Posterior vena cava (tissue), 2 donors: ENCODE measurements at regions of chr1 and their contacts with region 1.

Region 1: GRCh38 chr1:163174524-163175437 is 27.9 kb downstream of the RGS5 start:
- DNase-seq: peak; percentile 91

Region 2: DNA sequence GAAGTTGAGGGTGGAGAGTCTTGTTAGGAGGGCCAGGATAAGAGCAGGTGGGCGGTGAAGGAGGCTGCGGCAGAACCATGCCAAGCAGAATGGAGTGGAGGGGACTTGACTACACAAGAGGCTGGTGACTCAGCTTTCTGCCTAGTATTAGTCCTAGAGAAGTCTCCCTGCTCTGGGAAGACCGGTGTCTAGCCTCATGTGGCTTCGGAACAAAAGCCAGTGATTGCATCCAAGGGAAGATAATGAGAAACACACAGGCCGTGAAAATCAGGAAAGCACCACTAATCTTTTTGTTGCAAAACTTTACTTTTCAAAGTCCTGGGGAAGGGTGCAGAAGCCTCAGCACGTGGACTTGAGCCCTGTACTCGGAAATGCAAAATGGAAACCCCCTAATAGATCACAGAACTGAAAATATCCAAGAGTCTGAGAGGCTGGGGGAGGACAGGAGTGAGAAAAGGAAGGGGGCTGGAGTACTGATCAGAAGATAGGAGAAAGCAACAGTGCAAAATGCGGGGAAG is 511.1 kb before region 1 on chr1:
- intact Hi-C with region 1: no loop called
- DNase-seq: no peak

Region 3: DNA sequence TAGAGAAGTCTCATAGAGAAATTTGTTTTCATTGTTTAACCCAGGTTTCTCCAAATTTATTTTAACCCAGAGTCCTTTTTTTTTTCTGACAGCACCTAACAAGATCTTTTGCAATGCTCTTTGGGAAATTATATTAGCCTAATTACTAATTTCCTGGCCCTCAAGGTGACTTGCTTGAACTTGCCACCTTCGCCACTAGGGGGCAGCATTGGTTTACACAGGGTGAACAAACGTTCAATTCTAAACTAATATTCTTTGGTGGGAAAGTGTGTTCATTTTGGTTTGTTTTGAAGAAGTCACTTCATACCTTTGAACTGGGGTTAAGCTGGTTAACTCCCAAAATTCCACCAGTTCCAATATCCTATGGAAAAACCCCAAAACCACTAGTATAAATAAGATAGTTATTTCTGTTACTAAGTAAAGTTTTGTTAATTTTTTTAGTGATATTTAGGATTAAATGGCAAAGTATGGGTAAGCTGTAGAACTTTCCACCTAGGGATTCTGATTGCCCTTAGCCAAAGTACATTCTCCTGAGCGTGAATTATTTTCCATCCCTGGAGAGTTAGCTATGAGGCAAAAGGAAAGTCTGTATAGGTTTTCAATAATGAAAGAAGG is 326.8 kb before region 1 on chr1:
- intact Hi-C with region 1: loop called in 1 of 2 experiments (anchors 10 kb)
- DNase-seq: peak; percentile 90

Region 4: GRCh38 chr1:162878000-162878596 is 296.7 kb before region 1 on chr1:
- intact Hi-C with region 1: loop called (anchors 5 to 10 kb)
- DNase-seq: peak; percentile 87

Region 5: GRCh38 chr1:162951553-162952315 is 223.0 kb before region 1 on chr1:
- intact Hi-C with region 1: no loop called
- DNase-seq: no peak

Region 6: GRCh38 chr1:163071405-163072255 is 103.2 kb before region 1 on chr1:
- intact Hi-C with region 1: loop called (anchors 2 to 5 kb)
- DNase-seq: peak; percentile 82